Calu3 (cell line): ENCODE measurements at regions of chr17 and their contacts with region 1.

Region 1: GRCh38 chr17:37147301-37147812 is 198.6 kb downstream of the AATF start:
- DNase-seq: peak; percentile 32
- H3K4me3 Mint-ChIP-seq: no peak overlapping the region
- H3K27ac Mint-ChIP-seq: no peak overlapping the region
- H3K4me1 Mint-ChIP-seq: peaks cover 11% of the 10 kb centered on the region
- H3K27me3 Mint-ChIP-seq: no peaks in the 10 kb centered on the region
- CTCF ChIP-seq: no peak

Region 2: GRCh38 chr17:36668824-36669223 is 478.5 kb before region 1 on chr17:
- CTCF ChIA-PET with region 1: interaction called, 11 read pairs
- intact Hi-C with region 1: no loop called
- DNase-seq: no peak
- H3K4me3 Mint-ChIP-seq: no peak overlapping the region
- H3K27ac Mint-ChIP-seq: no peak overlapping the region
- H3K4me1 Mint-ChIP-seq: peaks cover 11% of the 10 kb centered on the region
- H3K27me3 Mint-ChIP-seq: peaks cover 70% of the 10 kb centered on the region
- CTCF ChIP-seq: no peak

Region 3: DNA sequence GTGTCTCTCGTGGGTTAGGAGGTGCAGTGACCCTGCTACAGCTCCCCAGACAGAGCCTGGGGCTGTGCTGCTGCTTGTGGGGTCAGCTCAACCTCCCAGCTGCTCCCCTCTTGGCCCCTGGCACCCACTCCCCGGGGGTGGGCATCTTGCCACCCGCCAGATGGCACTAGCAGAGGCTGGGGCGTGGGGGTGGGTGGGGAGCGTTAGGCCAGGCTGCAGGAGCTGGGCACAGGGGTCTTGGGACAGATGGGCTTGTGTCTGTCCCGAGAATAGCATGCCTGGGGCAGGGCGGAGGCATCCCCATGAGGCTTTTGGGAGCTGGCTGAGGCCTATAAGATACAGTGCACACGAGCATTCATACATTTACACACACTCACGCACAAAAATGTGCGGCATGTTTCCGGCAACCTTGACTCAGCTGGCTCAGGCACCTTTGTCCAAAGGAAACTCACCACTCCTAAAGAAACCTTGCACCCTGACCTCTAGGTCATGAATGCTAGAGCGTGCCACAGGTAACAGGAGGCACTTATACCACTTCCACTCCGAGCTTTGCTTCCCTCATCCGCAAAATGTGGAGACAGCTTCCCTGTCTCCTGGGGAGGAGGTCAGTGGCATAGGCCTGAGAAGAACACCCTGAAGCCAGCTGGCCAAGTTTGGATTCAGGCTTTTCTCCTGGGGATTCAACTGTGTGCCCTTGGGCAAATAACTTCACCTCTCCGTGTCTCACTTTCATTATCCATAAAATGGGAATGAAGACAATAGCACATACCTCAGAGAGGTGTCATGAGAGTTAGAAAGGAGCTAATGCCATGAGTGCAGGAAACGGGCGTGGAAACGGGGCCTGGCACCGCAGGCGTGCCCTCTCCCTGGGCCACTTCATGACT is 289.0 kb before region 1 on chr17:
- CTCF ChIA-PET with region 1: no interaction called
- intact Hi-C with region 1: no loop called
- DNase-seq: peak; percentile 60
- H3K4me3 Mint-ChIP-seq: no peak overlapping the region
- H3K27ac Mint-ChIP-seq: no peak overlapping the region
- H3K4me1 Mint-ChIP-seq: peaks cover 22% of the 10 kb centered on the region
- H3K27me3 Mint-ChIP-seq: peaks cover 69% of the 10 kb centered on the region
- CTCF ChIP-seq: no peak

Region 4: DNA sequence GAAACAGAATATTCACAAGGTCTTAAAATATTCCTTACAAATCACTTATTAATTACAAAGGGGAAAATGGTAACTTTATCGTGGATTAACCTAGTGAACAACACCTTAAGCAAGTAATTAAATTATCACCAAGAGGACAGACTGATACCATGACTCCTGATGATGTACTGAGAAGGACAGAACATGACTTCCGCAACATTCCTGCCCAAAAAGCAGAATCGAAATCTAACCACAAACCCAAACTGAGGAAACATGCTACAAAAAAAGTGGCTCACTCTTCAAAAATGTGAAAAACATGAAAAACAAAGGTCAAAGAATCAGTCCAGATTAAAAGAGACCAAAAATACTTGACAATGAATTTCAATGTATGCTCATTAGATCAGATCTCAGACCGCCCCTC is 47.1 kb before region 1 on chr17:
- CTCF ChIA-PET with region 1: no interaction called
- intact Hi-C with region 1: loop called (anchors 5 kb)
- DNase-seq: no peak
- H3K4me3 Mint-ChIP-seq: no peak overlapping the region
- H3K27ac Mint-ChIP-seq: no peak overlapping the region
- H3K4me1 Mint-ChIP-seq: no peaks in the 10 kb centered on the region
- H3K27me3 Mint-ChIP-seq: no peaks in the 10 kb centered on the region
- CTCF ChIP-seq: no peak

Region 5: DNA sequence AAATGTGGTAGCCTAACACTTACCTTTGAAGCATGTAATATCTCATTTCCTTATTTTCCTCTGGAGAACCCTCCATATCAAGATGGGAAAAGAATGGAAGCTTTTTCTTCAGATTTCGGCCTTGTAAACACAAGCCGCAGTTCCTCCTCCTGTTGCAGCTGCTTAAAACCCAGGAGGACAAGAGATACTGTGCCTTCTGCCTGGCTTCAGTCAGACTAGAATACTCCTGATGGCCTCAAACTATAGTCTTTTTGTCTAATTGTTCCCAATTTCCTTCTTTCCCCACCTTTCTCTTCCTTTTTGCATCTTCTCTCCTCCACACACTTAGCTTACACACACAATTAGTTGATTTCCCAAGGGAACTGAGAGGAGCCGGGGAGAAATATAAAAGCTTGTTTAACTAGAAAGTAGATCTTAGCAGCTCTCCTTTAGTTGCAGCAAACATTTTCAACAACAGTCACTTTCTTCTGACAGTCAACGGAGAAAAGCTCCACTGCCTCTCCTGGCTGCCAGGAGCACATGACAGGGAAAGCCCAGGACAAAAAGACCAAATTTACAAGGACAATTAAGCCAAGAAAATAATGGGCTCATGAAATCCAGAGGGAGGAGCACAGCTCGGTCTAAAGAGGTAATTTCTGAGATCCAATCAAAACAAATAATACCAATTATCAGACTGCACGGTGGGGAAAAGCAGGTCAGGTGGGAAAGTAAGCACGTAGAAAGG is 152.1 kb after region 1 on chr17:
- CTCF ChIA-PET with region 1: no interaction called
- intact Hi-C with region 1: no loop called
- DNase-seq: no peak
- H3K4me3 Mint-ChIP-seq: no peak overlapping the region
- H3K27ac Mint-ChIP-seq: no peak overlapping the region
- H3K4me1 Mint-ChIP-seq: peaks cover 24% of the 10 kb centered on the region
- H3K27me3 Mint-ChIP-seq: no peaks in the 10 kb centered on the region
- CTCF ChIP-seq: no peak